Endothelial cell of umbilical vein (primary cell): ENCODE measurements at regions of chr11 and their contacts with region 1.

Region 1: GRCh38 chr11:10899121-10899830 is 41.4 kb upstream of the ZBED5 start:
- DNase-seq: no peak
- H3K4me3 ChIP-seq: no peak overlapping the region
- H3K27ac ChIP-seq: peak overlapping the region; percentile 95
- H3K4me1 ChIP-seq: peaks cover 25% of the 10 kb centered on the region
- H3K27me3 ChIP-seq: no peaks in the 10 kb centered on the region
- CTCF ChIP-seq: no peak
- POLR2A ChIP-seq: no peak

Region 2: DNA sequence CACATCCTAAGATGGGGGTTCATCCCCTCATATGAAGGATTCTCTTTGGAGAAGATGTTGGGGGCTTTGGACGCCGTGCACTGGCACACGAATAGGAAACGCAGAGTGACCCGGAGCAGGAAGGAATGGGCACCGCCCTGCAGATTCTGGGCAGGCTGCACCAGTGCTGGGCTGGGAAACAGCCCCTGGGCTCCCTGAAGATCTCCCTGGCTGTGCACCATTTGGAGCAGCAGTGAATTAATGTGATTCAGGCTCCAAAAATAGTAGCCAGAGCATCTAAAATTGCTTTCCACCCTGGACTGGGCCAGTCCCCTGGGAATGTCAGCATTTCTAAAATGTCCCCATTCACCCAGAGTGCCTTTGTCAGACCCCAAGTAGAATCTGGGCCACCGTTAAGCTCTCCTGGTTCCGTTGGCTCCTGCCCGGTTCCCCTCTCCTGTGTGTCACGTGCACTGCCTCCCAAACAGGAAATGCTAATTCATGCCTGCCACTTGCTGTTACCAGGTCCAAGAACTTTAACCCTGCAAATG is 224.3 kb before region 1 on chr11:
- CTCF ChIA-PET with region 1: no interaction called
- POLR2A ChIA-PET with region 1: no interaction called
- dilution Hi-C with region 1: no loop called
- intact Hi-C with region 1: no loop called
- DNase-seq: no peak
- H3K4me3 ChIP-seq: no peak overlapping the region
- H3K27ac ChIP-seq: no peak overlapping the region
- H3K4me1 ChIP-seq: peaks cover 8% of the 10 kb centered on the region
- H3K27me3 ChIP-seq: peaks cover 0 to 4% of the 10 kb centered on the region in 2 experiments
- CTCF ChIP-seq: no peak
- POLR2A ChIP-seq: no peak

Region 3: GRCh38 chr11:10762185-10762584 is 137.1 kb before region 1 on chr11:
- CTCF ChIA-PET with region 1: no interaction called
- POLR2A ChIA-PET with region 1: no interaction called
- dilution Hi-C with region 1: no loop called
- intact Hi-C with region 1: no loop called
- DNase-seq: no peak
- H3K4me3 ChIP-seq: no peak overlapping the region
- H3K27ac ChIP-seq: no peak overlapping the region
- H3K4me1 ChIP-seq: peaks cover 4% of the 10 kb centered on the region
- H3K27me3 ChIP-seq: no peaks in the 10 kb centered on the region
- CTCF ChIP-seq: no peak
- POLR2A ChIP-seq: no peak

Region 4: GRCh38 chr11:10857709-10858438 is 41.4 kb before region 1 on chr11 and contains the start of gene ZBED5:
- CTCF ChIA-PET with region 1: interaction called, 15 read pairs
- POLR2A ChIA-PET with region 1: interaction called, 6 read pairs
- dilution Hi-C with region 1: no loop called
- intact Hi-C with region 1: loop called (anchors 1 kb)
- DNase-seq: peak; percentile 99
- H3K4me3 ChIP-seq: peak within 1 kb of the TSS; percentile 63 to 100 (median 94)
- H3K27ac ChIP-seq: peak within 1 kb of the TSS; percentile 80
- H3K4me1 ChIP-seq: peaks cover 8% of the 10 kb centered on the region
- H3K27me3 ChIP-seq: no peaks in the 10 kb centered on the region
- CTCF ChIP-seq: peak in 1 of 2 donors; percentile 4
- POLR2A ChIP-seq: peak; percentile 96
- total RNA-seq, gene ZBED5: 35.7 and 41.2 TPM in 2 replicates

Region 5: DNA sequence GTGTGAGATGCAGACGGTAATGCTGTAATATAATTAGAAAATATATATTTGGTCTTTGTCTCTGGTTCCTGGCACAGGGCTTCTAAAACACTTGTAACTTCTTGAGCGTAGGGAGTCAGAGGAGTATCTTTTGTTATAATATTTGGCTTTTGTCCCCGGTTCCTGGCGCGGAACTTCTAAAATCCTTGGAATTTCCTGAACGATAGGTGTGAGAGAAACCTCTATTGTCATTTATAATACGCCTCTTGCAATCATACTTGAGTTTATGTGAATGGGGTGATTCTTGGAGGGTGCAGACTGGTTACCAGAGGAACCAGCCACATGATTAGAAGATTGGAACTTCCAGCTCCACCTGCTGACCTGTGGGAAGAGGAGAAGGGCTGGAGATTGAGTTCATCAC is 12.6 kb after region 1 on chr11:
- CTCF ChIA-PET with region 1: interaction called, 3 read pairs
- POLR2A ChIA-PET with region 1: no interaction called
- dilution Hi-C with region 1: no loop called
- intact Hi-C with region 1: loop called (anchors 1 kb)
- DNase-seq: peak; percentile 34
- H3K4me3 ChIP-seq: no peak overlapping the region
- H3K27ac ChIP-seq: no peak overlapping the region
- H3K4me1 ChIP-seq: peaks cover 17% of the 10 kb centered on the region
- H3K27me3 ChIP-seq: no peaks in the 10 kb centered on the region
- CTCF ChIP-seq: no peak
- POLR2A ChIP-seq: no peak

Region 6: DNA sequence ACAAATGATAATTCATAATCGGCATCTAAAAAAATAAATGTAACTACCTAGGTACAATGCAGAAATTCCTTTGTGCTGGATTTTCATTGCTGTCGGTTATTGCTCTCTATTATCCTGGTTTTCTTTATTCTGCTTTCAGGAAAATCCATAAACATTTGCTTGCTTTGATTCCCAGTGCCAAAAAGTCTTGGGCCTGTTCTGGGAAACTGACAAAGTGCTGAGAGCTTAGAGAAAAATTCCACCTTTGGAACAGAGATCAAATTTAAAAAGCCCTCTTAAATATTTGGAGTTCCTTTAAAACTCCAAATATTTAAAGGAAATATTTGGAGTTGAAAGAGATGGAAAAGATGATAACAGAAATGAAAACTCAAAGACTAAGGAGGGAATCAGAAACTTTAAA is 45.9 kb after region 1 on chr11:
- CTCF ChIA-PET with region 1: no interaction called
- POLR2A ChIA-PET with region 1: no interaction called
- dilution Hi-C with region 1: no loop called
- intact Hi-C with region 1: no loop called
- DNase-seq: no peak
- H3K4me3 ChIP-seq: no peak overlapping the region
- H3K27ac ChIP-seq: no peak overlapping the region
- H3K4me1 ChIP-seq: no peaks in the 10 kb centered on the region
- H3K27me3 ChIP-seq: peaks cover 3 to 13% of the 10 kb centered on the region in 2 experiments
- CTCF ChIP-seq: no peak
- POLR2A ChIP-seq: no peak